ENCODE measurements at regions of chr9 and their contacts with region 1.

Region 1: DNA sequence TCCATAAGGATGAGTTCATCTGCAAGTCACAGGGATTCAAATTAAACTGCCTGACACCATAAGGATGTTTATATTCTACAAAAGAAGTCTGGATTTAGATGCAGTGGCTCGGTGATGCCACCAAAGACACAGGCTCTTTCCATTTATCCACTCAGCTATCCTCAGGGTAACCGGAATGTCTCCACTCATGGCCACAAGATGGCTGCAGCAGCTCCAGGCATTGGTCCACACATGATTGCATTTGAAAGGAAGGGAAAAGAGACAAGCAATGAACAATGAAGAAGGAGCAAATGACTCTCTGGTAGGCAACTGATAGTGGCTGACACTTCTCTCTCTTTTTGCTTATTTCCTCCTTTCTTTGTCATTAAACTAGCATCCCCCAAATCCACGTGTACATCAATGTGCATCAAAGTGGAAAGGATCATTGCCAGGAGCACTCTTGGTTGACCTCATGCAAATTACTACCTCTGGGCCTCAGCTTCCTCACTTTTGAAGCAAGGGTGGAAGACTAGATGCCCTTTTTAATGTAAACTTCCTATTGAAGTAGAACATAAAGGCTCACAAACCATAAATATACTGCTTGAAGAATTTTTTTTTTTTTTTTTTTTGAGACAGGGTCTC is 7.2 kb upstream of the SNX30 start:
- DNase-seq: no peak
- CTCF ChIP-seq: no peak

Region 2: GRCh38 chr9:111851566-111851965 is 891.8 kb before region 1 on chr9:
- CTCF ChIA-PET with region 1: no interaction called
- POLR2A ChIA-PET with region 1: no interaction called
- DNase-seq: no peak
- CTCF ChIP-seq: no peak

Region 3: DNA sequence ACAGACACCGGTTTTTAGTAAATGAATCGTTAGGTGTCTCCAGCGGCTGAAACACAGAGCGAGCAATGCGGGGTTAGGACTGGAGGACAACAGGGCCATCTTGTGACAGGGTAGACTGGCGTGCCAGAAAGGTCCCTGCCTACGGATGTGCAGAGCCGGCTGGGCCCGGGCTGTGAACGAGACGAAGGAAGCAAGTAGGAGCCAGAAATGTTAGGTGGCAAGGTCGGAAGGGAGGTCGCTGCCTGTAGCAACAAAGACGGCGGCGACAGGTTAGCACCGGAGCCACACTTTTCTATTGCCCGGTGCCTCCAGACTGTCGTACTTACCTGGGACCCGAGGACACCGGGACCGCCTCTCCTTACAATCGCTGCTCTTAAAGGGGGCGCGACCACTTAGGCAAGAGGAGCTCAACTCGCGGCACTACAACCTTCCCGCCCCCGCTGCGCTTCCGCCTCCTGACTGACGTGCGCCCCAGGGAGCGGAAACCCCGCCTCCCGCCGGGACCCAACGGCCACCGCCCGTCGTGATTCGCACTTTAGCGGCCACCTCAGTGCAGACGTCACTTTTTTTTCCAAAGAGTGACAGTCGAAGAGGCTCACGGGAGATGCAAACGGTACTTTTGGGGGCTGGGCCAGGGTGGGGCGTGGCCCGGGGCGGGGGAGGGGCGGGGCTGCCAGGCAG is 25.5 kb before region 1 on chr9 and contains the start of gene INIP:
- CTCF ChIA-PET with region 1: interaction called, 10 read pairs
- POLR2A ChIA-PET with region 1: no interaction called
- DNase-seq: peak; percentile 97
- CTCF ChIP-seq: peak; percentile 25

Region 4: DNA sequence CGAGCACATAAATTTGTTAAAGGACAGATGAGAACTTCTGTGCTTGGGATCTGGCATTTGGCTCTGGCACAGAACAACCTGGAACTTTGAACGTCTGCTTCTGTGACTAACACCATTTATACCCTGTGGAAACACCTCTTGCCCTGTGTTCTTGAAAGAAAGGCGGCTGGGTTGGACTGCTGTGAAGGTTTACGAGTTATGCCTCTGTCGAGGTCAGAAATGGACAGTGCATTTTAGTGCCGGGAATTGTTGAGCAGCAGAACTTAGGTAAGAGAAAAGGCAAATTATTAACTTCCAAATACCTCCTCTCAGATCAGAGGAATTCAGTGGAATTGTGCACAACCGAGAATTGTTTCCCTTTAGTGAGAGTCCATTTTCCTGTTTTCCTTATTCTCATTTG is 11.4 kb before region 1 on chr9:
- CTCF ChIA-PET with region 1: interaction called, 11 read pairs
- POLR2A ChIA-PET with region 1: no interaction called
- DNase-seq: no peak
- CTCF ChIP-seq: no peak

Region 5: DNA sequence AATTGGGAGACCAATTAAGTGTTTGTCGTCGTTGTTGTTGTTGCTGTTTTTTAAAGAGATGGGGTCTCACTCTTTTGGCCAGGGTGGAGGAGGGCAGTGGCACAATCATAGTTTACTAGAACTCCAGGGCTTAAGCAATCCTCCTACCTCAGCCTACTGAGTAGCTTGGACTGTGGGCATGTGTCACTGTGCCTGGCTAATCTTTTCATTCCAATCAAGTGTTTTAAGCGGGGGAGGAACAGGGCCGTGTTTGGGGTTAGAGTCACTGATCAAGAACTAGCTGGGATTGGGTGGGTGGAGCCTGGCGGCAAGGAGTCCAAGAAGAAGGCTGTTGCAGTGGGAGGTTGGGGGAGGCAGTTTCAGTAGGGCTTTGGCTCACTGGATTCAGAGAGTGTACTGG is 21.0 kb after region 1 on chr9:
- CTCF ChIA-PET with region 1: no interaction called
- POLR2A ChIA-PET with region 1: no interaction called
- DNase-seq: no peak
- CTCF ChIP-seq: no peak

Region 6: GRCh38 chr9:112793213-112793810 is 50.0 kb after region 1 on chr9:
- CTCF ChIA-PET with region 1: no interaction called
- POLR2A ChIA-PET with region 1: no interaction called
- DNase-seq: peak; percentile 73
- CTCF ChIP-seq: peak; percentile 81